ENCODE measurements at regions of chr5 and their contacts with region 1.

Region 1: GRCh38 chr5:74640450-74640953 is at the start of gene ENC1:
- DNase-seq: peak; percentile 59 to 95
- H3K4me3 ChIP-seq: peak within 1 kb of the TSS; percentile 60
- CTCF ChIP-seq: peak in 1 of 3 donors; percentile 56
- POLR2A ChIP-seq: no peak
- total RNA-seq, gene ENC1: 10.5 to 14.1 (median 13.1) TPM

Region 2: DNA sequence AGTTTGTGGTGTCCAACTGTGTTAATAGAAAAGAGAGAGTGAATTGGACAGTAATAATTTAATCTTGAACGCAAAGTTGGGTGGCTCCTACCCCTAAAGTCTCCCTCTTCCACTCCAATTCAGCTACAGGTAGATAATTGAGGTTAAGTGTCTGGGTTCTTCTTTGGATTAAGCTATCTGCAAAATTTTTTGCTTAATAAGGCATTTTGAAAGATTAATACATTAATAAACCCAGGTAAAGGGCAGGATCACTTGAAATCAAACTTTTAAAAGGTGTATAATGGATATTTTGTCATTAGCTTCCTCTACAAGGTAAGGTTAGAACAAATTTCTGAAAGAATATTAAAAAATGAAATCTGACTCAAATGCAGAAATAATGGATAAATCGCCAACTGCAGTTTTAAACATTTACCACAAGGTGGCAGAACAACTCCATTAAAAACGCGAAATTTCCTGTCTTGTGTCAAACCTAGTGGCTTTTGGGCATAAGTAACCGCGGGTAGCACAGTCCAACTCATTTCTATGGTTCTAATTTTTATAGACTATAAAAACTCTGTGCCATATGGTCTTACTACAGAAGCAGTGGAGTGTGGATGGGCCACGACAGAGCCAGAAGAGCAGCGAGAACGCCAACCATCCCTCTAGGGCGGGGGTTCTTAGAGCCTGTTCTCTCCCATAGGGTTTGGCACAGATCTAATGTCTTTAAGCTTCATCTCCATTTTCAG is 738.0 kb before region 1 on chr5:
- intact Hi-C with region 1: loop called (anchors 5 kb)
- DNase-seq: no peak
- H3K4me3 ChIP-seq: no peak overlapping the region
- CTCF ChIP-seq: peak in 2 of 3 donors; percentile 26 to 74
- POLR2A ChIP-seq: no peak